PC-9 (cell line): ENCODE measurements at regions of chr18 and their contacts with region 1.

Region 1: GRCh38 chr18:1732143-1732542 is 827.5 kb downstream of the ADCYAP1 start:
- DNase-seq: no peak
- H3K4me3 ChIP-seq: no peak overlapping the region
- H3K27ac ChIP-seq: no peak overlapping the region
- H3K4me1 ChIP-seq: no peaks in the 10 kb centered on the region
- H3K27me3 ChIP-seq: no peaks in the 10 kb centered on the region
- CTCF ChIP-seq: no peak

Region 2: DNA sequence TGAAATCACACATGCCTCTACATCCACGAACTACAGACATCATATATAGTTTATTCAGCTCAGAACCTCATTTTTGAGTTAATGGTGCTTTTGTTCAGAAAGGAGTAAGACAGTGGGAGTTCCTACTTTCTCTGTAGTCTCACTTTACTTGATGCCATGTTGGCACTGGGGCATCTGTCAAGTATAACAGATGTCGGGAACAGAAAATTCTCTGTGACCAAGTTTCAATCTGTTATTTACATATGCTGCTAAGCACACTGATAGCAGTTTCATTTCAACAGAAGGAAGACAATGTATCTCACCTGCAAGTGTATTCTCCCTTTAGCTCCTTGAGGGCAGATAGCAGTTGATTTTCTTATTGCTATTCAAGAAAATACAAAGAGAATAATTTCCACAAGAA is 65.1 kb after region 1 on chr18:
- CTCF ChIA-PET with region 1: no interaction called
- POLR2A ChIA-PET with region 1: no interaction called
- intact Hi-C with region 1: loop called (anchors 10 kb)
- DNase-seq: no peak
- H3K4me3 ChIP-seq: no peak overlapping the region
- H3K27ac ChIP-seq: no peak overlapping the region
- H3K4me1 ChIP-seq: no peaks in the 10 kb centered on the region
- H3K27me3 ChIP-seq: no peaks in the 10 kb centered on the region
- CTCF ChIP-seq: no peak